ENCODE measurements at regions of chr6 and their contacts with region 1.

Region 1: GRCh38 chr6:153989989-153990388 is 49.1 kb upstream of the OPRM1 start:
- DNase-seq: no peak
- H3K4me3 ChIP-seq: no peak overlapping the region
- H3K27ac ChIP-seq: no peak overlapping the region
- H3K4me1 ChIP-seq: no peaks in the 10 kb centered on the region
- H3K27me3 ChIP-seq: no peaks in the 10 kb centered on the region
- CTCF ChIP-seq: no peak
- POLR2A ChIP-seq: no peak

Region 2: DNA sequence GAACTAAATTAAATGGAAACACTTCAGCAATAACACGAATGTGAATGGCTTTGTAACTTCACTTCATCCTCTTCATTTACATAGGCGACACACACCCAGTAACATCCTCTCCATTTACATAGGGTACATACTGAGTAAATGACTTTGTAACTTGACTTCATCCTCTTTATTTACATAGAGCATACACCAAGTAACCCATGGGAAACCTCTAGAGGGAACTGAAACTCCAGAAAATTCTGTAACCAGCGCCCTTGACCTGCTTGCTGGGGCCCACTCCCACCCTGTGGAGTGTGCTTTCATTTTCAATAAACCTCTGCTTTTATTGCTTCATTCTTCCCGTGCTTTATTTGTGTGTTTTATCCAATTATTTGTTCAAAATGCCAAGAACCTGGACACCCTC is 32.6 kb before region 1 on chr6:
- intact Hi-C with region 1: no loop called
- DNase-seq: no peak
- H3K4me3 ChIP-seq: no peak overlapping the region
- H3K27ac ChIP-seq: no peak overlapping the region
- H3K4me1 ChIP-seq: peaks cover 11% of the 10 kb centered on the region
- H3K27me3 ChIP-seq: no peaks in the 10 kb centered on the region
- CTCF ChIP-seq: no peak
- POLR2A ChIP-seq: no peak

Region 3: DNA sequence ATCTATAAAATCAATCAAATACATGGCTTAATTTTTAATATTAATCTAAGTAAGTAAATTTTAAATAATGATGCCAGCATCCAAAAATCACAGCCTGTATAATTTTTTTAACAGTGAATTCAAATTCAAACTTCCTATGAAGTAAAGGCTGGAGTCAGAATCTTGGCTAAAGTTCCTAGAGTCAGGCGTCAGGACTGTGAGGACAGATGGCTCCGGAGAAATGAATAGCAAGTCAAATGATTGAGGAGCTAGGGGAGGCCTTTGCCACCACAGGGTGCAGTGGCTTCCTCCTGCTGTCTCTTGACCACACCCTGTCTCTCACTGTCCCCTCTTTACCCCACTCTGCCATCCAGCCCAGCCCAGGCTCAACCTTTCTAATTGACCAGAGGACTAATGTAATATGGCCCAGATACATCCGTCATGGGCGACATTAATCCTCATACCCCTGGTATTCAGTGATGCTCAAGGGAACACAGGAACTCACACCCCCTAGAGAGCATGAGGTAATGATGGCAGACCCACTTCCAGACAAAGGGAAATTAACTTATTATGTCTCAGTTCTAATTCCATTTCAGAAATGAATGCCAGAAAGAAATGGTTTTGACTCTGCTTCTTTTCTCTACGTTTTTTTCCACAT is 102.5 kb after region 1 on chr6:
- intact Hi-C with region 1: no loop called
- DNase-seq: no peak
- H3K4me3 ChIP-seq: no peak overlapping the region
- H3K27ac ChIP-seq: no peak overlapping the region
- H3K4me1 ChIP-seq: no peaks in the 10 kb centered on the region
- H3K27me3 ChIP-seq: no peaks in the 10 kb centered on the region
- CTCF ChIP-seq: no peak
- POLR2A ChIP-seq: no peak

Region 4: GRCh38 chr6:154509421-154510142 is 519.6 kb after region 1 on chr6:
- intact Hi-C with region 1: no loop called
- DNase-seq: no peak
- H3K4me3 ChIP-seq: peak overlapping the region; percentile 64 to 73
- H3K27ac ChIP-seq: peak overlapping the region; percentile 80
- H3K4me1 ChIP-seq: peaks cover 31% of the 10 kb centered on the region
- H3K27me3 ChIP-seq: no peaks in the 10 kb centered on the region
- CTCF ChIP-seq: no peak
- POLR2A ChIP-seq: no peak

Region 5: GRCh38 chr6:155181498-155181897 is 1191.5 kb after region 1 on chr6:
- intact Hi-C with region 1: loop called (anchors 5 kb)
- DNase-seq: no peak
- H3K4me3 ChIP-seq: no peak overlapping the region
- H3K27ac ChIP-seq: no peak overlapping the region
- H3K4me1 ChIP-seq: peaks cover 12% of the 10 kb centered on the region
- H3K27me3 ChIP-seq: no peaks in the 10 kb centered on the region
- CTCF ChIP-seq: no peak
- POLR2A ChIP-seq: no peak

Measured in vagina (tissue), 2 donors.